A673 (cell line): ENCODE measurements at regions of chr4 and their contacts with region 1.

Region 1: GRCh38 chr4:99405433-99406115 is 29.6 kb downstream of the ADH7 start:
- DNase-seq: peak; percentile 70
- H3K4me3 ChIP-seq: no peak overlapping the region
- H3K27ac ChIP-seq: no peak overlapping the region
- H3K4me1 ChIP-seq: no peaks in the 10 kb centered on the region
- H3K27me3 ChIP-seq: no peaks in the 10 kb centered on the region
- CTCF ChIP-seq: peak; percentile 85

Region 2: GRCh38 chr4:98828801-98829200 is 576.8 kb before region 1 on chr4:
- CTCF ChIA-PET with region 1: no interaction called
- POLR2A ChIA-PET with region 1: no interaction called
- intact Hi-C with region 1: no loop called
- DNase-seq: peak; percentile 66
- H3K4me3 ChIP-seq: no peak overlapping the region
- H3K27ac ChIP-seq: no peak overlapping the region
- H3K4me1 ChIP-seq: peaks cover 23% of the 10 kb centered on the region
- H3K27me3 ChIP-seq: no peaks in the 10 kb centered on the region
- CTCF ChIP-seq: peak; percentile 62

Region 3: DNA sequence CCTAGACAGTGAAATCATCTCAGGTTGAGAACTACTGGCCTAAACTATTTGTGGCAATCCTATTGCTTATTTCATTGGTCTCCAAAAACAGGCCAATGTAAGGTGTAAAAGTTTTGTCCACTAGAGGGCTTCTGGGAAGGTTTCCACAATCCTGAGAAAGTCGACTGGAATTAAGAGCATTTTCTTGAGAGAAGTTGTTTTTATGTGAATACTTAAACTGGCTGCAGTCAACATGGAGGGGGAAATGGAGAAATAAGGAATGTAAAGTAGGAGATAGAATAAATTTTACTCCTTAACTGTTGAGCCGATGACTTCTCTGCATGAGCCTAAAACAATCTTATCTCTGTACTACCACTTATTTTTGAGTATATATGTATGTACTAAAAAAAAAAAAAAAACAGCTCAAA is 465.7 kb before region 1 on chr4:
- CTCF ChIA-PET with region 1: no interaction called
- POLR2A ChIA-PET with region 1: no interaction called
- intact Hi-C with region 1: loop called (anchors 2 kb)
- DNase-seq: peak; percentile 81
- H3K4me3 ChIP-seq: no peak overlapping the region
- H3K27ac ChIP-seq: no peak overlapping the region
- H3K4me1 ChIP-seq: peaks cover 4% of the 10 kb centered on the region
- H3K27me3 ChIP-seq: no peaks in the 10 kb centered on the region
- CTCF ChIP-seq: peak; percentile 81

Region 4: GRCh38 chr4:99117876-99118693 is 287.5 kb before region 1 on chr4:
- CTCF ChIA-PET with region 1: no interaction called
- POLR2A ChIA-PET with region 1: no interaction called
- intact Hi-C with region 1: loop called (anchors 1 kb)
- DNase-seq: peak; percentile 39
- H3K4me3 ChIP-seq: no peak overlapping the region
- H3K27ac ChIP-seq: no peak overlapping the region
- H3K4me1 ChIP-seq: no peaks in the 10 kb centered on the region
- H3K27me3 ChIP-seq: no peaks in the 10 kb centered on the region
- CTCF ChIP-seq: peak; percentile 65

Region 5: GRCh38 chr4:99190336-99190735 is 215.2 kb before region 1 on chr4:
- CTCF ChIA-PET with region 1: no interaction called
- POLR2A ChIA-PET with region 1: no interaction called
- intact Hi-C with region 1: no loop called
- DNase-seq: peak; percentile 82
- H3K4me3 ChIP-seq: no peak overlapping the region
- H3K27ac ChIP-seq: peak overlapping the region; percentile 74
- H3K4me1 ChIP-seq: no peaks in the 10 kb centered on the region
- H3K27me3 ChIP-seq: no peaks in the 10 kb centered on the region
- CTCF ChIP-seq: no peak

Region 6: GRCh38 chr4:99201690-99202089 is 203.9 kb before region 1 on chr4:
- CTCF ChIA-PET with region 1: no interaction called
- POLR2A ChIA-PET with region 1: no interaction called
- intact Hi-C with region 1: loop called (anchors 5 kb)
- DNase-seq: no peak
- H3K4me3 ChIP-seq: no peak overlapping the region
- H3K27ac ChIP-seq: no peak overlapping the region
- H3K4me1 ChIP-seq: peaks cover 18% of the 10 kb centered on the region
- H3K27me3 ChIP-seq: no peaks in the 10 kb centered on the region
- CTCF ChIP-seq: peak; percentile 35; the same call in 1 of the 2 replicates